Endothelial cell of umbilical vein (primary cell): ENCODE measurements at regions of chr1 and their contacts with region 1.

Region 1: DNA sequence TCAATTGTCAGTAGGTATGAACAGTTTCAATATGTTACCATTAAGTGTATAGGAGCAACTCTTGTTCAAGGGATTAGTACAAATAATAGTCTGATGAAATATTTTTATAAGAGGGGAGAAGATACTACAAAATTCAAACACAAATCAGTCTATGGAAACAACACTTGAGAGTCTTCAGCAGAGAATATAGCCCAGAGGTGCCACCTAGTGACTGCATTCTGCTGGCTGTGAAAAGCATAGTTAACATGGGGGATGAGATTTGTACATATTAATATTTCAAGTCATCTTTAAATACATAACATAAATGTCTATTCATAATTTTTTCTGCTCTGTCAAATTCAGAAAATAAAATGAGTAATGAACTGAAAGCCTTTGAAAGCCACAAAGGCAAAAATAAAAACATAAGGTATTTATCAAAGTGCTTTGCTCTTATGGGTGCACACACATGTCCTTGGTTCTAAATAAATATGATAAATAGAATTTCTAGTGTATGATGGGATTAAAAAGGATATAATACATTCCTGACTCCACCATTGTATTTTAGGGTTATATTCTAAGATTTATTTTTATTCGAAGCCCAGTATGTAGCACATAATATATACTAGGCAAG is 440.9 kb upstream of the ZRANB2 start:
- DNase-seq: peak; percentile 52
- H3K4me3 ChIP-seq: no peak overlapping the region
- H3K27ac ChIP-seq: no peak overlapping the region
- H3K4me1 ChIP-seq: no peaks in the 10 kb centered on the region
- H3K27me3 ChIP-seq: no peaks in the 10 kb centered on the region
- CTCF ChIP-seq: peak; percentile 30 to 54
- POLR2A ChIP-seq: no peak

Region 2: DNA sequence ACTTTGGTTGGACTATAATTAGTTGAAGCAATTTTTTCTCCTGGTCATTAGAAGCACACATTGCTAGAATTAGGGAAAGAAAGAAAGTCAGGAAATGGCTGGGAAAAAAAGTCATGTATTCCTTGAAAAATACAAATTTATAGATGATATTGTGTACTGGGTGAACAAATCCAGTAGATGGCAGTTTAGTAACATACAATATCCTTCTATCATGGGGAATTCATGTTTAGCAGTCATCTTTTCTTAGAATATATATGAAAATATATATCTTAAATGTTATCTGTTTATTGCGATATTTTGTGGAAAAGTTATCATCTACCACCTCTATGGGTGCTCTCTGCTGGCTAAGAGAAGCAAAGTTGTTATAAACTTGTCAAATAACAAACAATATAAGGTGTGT is 427.8 kb before region 1 on chr1:
- CTCF ChIA-PET with region 1: interaction called, 16 read pairs
- POLR2A ChIA-PET with region 1: no interaction called
- dilution Hi-C with region 1: no loop called
- intact Hi-C with region 1: loop called (anchors 5 kb)
- DNase-seq: peak; percentile 31
- H3K4me3 ChIP-seq: no peak overlapping the region
- H3K27ac ChIP-seq: no peak overlapping the region
- H3K4me1 ChIP-seq: no peaks in the 10 kb centered on the region
- H3K27me3 ChIP-seq: peaks cover 0 to 2% of the 10 kb centered on the region in 2 experiments
- CTCF ChIP-seq: peak in 1 of 2 donors; percentile 9
- POLR2A ChIP-seq: no peak

Region 3: GRCh38 chr1:71196685-71197084 is 325.1 kb before region 1 on chr1:
- CTCF ChIA-PET with region 1: interaction called, 59 read pairs
- POLR2A ChIA-PET with region 1: no interaction called
- dilution Hi-C with region 1: no loop called
- intact Hi-C with region 1: loop called (anchors 1 kb)
- DNase-seq: peak; percentile 16
- H3K4me3 ChIP-seq: no peak overlapping the region
- H3K27ac ChIP-seq: no peak overlapping the region
- H3K4me1 ChIP-seq: no peaks in the 10 kb centered on the region
- H3K27me3 ChIP-seq: no peaks in the 10 kb centered on the region
- CTCF ChIP-seq: peak in 1 of 2 donors; percentile 8
- POLR2A ChIP-seq: no peak

Region 4: DNA sequence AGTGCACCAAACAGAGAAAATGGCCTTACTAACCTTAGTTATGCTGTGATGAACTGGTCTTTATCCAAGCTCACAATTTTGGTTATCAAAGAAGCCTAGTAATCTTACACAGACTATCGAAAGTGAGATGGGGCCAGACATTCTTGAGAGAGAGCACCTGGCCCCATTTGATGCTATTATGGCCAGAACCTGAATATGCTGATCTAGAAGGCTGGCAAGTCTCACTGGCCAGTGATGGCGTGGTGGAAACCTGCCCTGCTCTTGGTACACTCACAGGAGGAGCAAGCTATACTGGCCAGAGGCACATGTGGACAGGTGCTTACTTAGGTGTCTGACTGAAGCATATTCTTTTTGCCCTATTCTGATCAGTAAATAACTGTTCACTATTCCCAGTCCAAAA is 83.1 kb before region 1 on chr1:
- CTCF ChIA-PET with region 1: no interaction called
- POLR2A ChIA-PET with region 1: no interaction called
- dilution Hi-C with region 1: no loop called
- intact Hi-C with region 1: no loop called
- DNase-seq: no peak
- H3K4me3 ChIP-seq: no peak overlapping the region
- H3K27ac ChIP-seq: no peak overlapping the region
- H3K4me1 ChIP-seq: no peaks in the 10 kb centered on the region
- H3K27me3 ChIP-seq: no peaks in the 10 kb centered on the region
- CTCF ChIP-seq: no peak
- POLR2A ChIP-seq: no peak

Region 5: GRCh38 chr1:71494163-71494562 is 27.6 kb before region 1 on chr1:
- CTCF ChIA-PET with region 1: no interaction called
- POLR2A ChIA-PET with region 1: no interaction called
- dilution Hi-C with region 1: no loop called
- intact Hi-C with region 1: no loop called
- DNase-seq: no peak
- H3K4me3 ChIP-seq: no peak overlapping the region
- H3K27ac ChIP-seq: no peak overlapping the region
- H3K4me1 ChIP-seq: no peaks in the 10 kb centered on the region
- H3K27me3 ChIP-seq: no peaks in the 10 kb centered on the region
- CTCF ChIP-seq: no peak
- POLR2A ChIP-seq: no peak

Region 6: DNA sequence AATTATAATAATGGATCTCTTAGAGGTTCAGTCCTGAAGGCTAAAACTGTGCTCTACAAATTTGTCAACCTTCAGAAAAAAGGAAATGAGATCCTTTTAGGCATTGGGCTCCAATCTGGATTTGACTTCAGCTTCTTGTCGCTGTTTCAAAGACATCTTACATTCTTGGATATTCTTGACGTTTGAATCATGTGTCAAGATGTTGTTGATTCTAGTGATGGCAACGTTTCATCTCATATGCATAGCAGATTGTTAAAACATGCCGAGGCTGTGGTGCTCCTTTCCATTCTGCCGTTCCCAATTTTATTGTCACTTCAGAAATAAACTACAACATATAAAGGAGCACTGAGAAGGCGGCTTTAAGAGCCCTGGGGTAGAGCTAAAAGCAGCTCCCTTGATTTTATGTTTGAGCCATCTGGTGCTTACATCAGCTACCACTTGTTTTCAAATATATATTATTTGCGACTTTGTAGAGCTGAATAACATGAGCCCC is 26.7 kb after region 1 on chr1:
- CTCF ChIA-PET with region 1: no interaction called
- POLR2A ChIA-PET with region 1: no interaction called
- dilution Hi-C with region 1: no loop called
- intact Hi-C with region 1: no loop called
- DNase-seq: no peak
- H3K4me3 ChIP-seq: no peak overlapping the region
- H3K27ac ChIP-seq: no peak overlapping the region
- H3K4me1 ChIP-seq: no peaks in the 10 kb centered on the region
- H3K27me3 ChIP-seq: no peaks in the 10 kb centered on the region
- CTCF ChIP-seq: no peak
- POLR2A ChIP-seq: no peak